Colonic mucosa (tissue), 4 donors: ENCODE measurements at regions of chr7 and their contacts with region 1.

Region 1: GRCh38 chr7:55255496-55256435 is 109.4 kb upstream of the LANCL2 start:
- DNase-seq: peak; percentile 88
- H3K4me3 ChIP-seq: peak overlapping the region; percentile 61
- H3K27ac ChIP-seq: no peak overlapping the region
- H3K4me1 ChIP-seq: peaks cover 6% of the 10 kb centered on the region
- H3K27me3 ChIP-seq: peaks cover 4% of the 10 kb centered on the region
- CTCF ChIP-seq: peak; percentile 82

Region 2: GRCh38 chr7:54773472-54774399 is 482.0 kb before region 1 on chr7:
- intact Hi-C with region 1: loop called (anchors 2 kb)
- DNase-seq: peak; percentile 87
- H3K4me3 ChIP-seq: peak overlapping the region; percentile 28
- H3K27ac ChIP-seq: no peak overlapping the region
- H3K4me1 ChIP-seq: no peaks in the 10 kb centered on the region
- H3K27me3 ChIP-seq: no peaks in the 10 kb centered on the region
- CTCF ChIP-seq: peak; percentile 72

Region 3: DNA sequence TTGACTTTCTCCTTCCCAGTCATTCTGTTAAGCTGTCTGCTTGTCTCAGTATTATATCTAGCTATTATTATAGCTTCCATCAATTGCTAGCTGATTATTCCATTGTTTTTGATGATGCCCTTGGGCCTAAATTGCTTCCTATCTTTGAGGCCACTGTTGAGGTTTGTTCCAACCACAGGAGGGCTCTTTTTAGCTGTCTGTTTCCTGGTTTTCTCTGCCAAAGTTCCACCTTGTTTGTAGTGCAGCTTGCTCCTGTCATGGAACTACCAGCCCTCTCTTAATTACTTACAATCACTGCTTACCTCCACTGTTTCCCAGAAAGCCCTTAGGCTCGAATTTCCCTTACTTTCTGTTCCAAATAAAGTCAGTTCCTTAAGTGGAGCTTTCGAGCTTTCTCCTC is 378.1 kb before region 1 on chr7:
- intact Hi-C with region 1: loop called (anchors 5 kb)
- DNase-seq: no peak
- H3K4me3 ChIP-seq: no peak overlapping the region
- H3K27ac ChIP-seq: peak overlapping the region; percentile 22
- H3K4me1 ChIP-seq: no peaks in the 10 kb centered on the region
- H3K27me3 ChIP-seq: no peaks in the 10 kb centered on the region
- CTCF ChIP-seq: no peak

Region 4: GRCh38 chr7:55019691-55020465 is 235.9 kb before region 1 on chr7:
- intact Hi-C with region 1: loop called (anchors 10 kb)
- DNase-seq: peak; percentile 54
- H3K4me3 ChIP-seq: peak overlapping the region; percentile 73
- H3K27ac ChIP-seq: peak overlapping the region; percentile 82
- H3K4me1 ChIP-seq: no peaks in the 10 kb centered on the region
- H3K27me3 ChIP-seq: no peaks in the 10 kb centered on the region
- CTCF ChIP-seq: no peak